ENCODE measurements at regions of chr3 and their contacts with region 1.

Region 1: GRCh38 chr3:186617038-186617946 is 4.4 kb downstream of the AHSG start:
- DNase-seq: peak; percentile 86
- ATAC-seq: peak; percentile 95
- H3K4me3 ChIP-seq: peak overlapping the region in 2 of 5 experiments; percentile 29 to 30
- H3K4me3 Mint-ChIP-seq: peak overlapping the region; percentile 74
- H3K27ac ChIP-seq: no peak overlapping the region
- H3K27ac Mint-ChIP-seq: no peak overlapping the region
- H3K4me1 ChIP-seq: peaks cover 19% of the 10 kb centered on the region in 2 donors
- H3K4me1 Mint-ChIP-seq: peaks cover 13% of the 10 kb centered on the region
- H3K27me3 ChIP-seq: peaks cover 0 to 35% (median 9%) of the 10 kb centered on the region in 4 experiments
- H3K27me3 Mint-ChIP-seq: peaks cover 58% of the 10 kb centered on the region
- CTCF ChIP-seq: peak; percentile 95

Region 2: DNA sequence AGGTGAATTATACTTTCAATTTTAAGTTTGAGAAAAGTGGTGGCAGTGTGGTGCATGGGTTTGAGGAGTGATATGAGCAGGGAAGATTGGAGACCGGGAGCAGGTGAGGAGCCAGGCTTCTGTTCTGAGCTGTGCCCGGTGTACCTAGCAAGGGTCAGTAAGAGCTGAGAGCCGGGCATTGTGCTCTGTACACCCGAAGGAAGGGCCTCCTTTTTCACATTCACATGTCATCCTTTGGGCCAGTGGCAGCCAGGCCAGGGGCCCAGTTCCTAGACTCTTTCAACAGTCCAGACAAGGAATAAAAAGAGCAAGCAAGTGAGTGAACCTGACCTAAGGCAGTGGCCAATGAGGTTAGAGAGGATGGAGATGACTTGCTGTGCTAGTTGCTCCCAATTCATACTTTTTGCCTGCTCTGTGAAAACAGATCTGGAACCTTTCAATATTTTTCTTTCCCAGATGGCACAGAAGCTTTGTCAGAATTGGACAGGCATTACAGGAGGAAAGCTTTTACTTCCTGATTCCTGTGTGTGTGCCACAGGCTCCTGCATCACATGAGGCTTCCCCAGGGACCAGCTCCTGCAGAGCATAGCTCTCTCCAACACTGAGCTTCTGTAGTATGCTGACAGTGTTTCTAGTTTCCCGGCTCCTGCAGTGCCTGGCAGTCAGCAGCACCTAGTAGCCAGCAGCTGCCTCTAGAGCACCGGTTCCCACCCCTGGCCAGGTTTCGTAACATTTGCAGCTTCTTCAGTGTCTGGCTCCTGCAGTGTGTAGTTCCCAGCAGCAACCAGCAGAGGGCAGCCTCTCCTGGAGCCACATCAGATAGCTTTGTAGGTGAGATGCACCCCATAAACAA is 674.2 kb before region 1 on chr3:
- CTCF ChIA-PET with region 1: interaction called, 55 read pairs
- POLR2A ChIA-PET with region 1: no interaction called
- intact Hi-C with region 1: loop called (anchors 1 kb)
- DNase-seq: peak; percentile 90
- ATAC-seq: peak; percentile 98
- H3K4me3 ChIP-seq: peak overlapping the region in 4 of 5 experiments; percentile 13 to 35 (median 21)
- H3K4me3 Mint-ChIP-seq: peak overlapping the region; percentile 70
- H3K27ac ChIP-seq: no peak overlapping the region
- H3K27ac Mint-ChIP-seq: peak overlapping the region; percentile 70
- H3K4me1 ChIP-seq: peaks cover 6 to 14% of the 10 kb centered on the region in 2 donors
- H3K4me1 Mint-ChIP-seq: peaks cover 14% of the 10 kb centered on the region
- H3K27me3 ChIP-seq: peaks cover 0 to 4% (median 2%) of the 10 kb centered on the region in 4 experiments
- H3K27me3 Mint-ChIP-seq: peaks cover 7% of the 10 kb centered on the region
- CTCF ChIP-seq: peak; percentile 98

Region 3: GRCh38 chr3:186259612-186260383 is 357.5 kb before region 1 on chr3:
- CTCF ChIA-PET with region 1: interaction called, 38 read pairs
- POLR2A ChIA-PET with region 1: no interaction called
- intact Hi-C with region 1: no loop called
- DNase-seq: peak; percentile 80
- ATAC-seq: peak; percentile 65
- H3K4me3 ChIP-seq: no peak overlapping the region
- H3K4me3 Mint-ChIP-seq: peak overlapping the region; percentile 10
- H3K27ac ChIP-seq: no peak overlapping the region
- H3K27ac Mint-ChIP-seq: peak overlapping the region; percentile 41
- H3K4me1 ChIP-seq: peaks cover 31 to 35% of the 10 kb centered on the region in 2 donors
- H3K4me1 Mint-ChIP-seq: peaks cover 43% of the 10 kb centered on the region
- H3K27me3 ChIP-seq: no peaks in the 10 kb centered on the region
- H3K27me3 Mint-ChIP-seq: no peaks in the 10 kb centered on the region
- CTCF ChIP-seq: peak; percentile 81

Region 4: DNA sequence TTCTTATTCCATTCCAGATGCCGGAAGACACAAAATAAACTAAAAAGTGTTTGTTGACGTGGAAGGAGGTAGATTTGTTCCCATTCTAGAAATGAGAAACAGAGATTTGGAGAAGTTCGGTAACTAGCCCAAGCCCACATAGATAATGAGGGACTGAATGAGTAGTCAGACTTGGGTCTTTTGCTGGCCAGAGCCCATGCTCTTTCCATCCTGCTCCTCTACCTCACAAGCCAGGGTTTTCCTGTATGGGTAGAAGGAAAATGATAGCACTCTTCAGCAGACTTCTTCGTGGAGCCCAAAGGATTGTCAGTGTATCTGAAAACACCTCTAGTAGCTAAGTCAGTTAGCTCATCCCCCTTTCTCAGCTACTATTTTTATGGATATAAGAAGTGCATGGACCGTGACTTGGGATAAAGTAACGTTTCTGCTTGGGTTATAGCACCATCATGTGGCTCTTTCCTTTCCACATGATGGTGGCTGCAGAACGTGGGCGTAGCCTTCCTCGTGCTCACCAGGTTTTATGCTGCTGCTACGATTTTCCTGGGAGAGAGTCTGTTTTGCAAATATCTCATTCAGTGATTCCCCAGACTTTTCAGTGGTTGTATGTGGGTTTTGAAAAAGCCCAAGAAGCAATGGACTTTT is 339.9 kb before region 1 on chr3:
- CTCF ChIA-PET with region 1: no interaction called
- POLR2A ChIA-PET with region 1: no interaction called
- intact Hi-C with region 1: no loop called
- DNase-seq: no peak
- ATAC-seq: no peak
- H3K4me3 ChIP-seq: no peak overlapping the region
- H3K4me3 Mint-ChIP-seq: no peak overlapping the region
- H3K27ac ChIP-seq: no peak overlapping the region
- H3K27ac Mint-ChIP-seq: no peak overlapping the region
- H3K4me1 ChIP-seq: peaks cover 12 to 18% of the 10 kb centered on the region in 2 donors
- H3K4me1 Mint-ChIP-seq: peaks cover 18% of the 10 kb centered on the region
- H3K27me3 ChIP-seq: no peaks in the 10 kb centered on the region
- H3K27me3 Mint-ChIP-seq: no peaks in the 10 kb centered on the region
- CTCF ChIP-seq: no peak

Region 5: GRCh38 chr3:186583831-186584230 is 33.5 kb before region 1 on chr3:
- CTCF ChIA-PET with region 1: interaction called, 10 read pairs
- POLR2A ChIA-PET with region 1: no interaction called
- intact Hi-C with region 1: no loop called
- DNase-seq: no peak
- ATAC-seq: no peak
- H3K4me3 ChIP-seq: no peak overlapping the region
- H3K4me3 Mint-ChIP-seq: no peak overlapping the region
- H3K27ac ChIP-seq: no peak overlapping the region
- H3K27ac Mint-ChIP-seq: no peak overlapping the region
- H3K4me1 ChIP-seq: no peaks in the 10 kb centered on the region
- H3K4me1 Mint-ChIP-seq: no peaks in the 10 kb centered on the region
- H3K27me3 ChIP-seq: no peaks in the 10 kb centered on the region
- H3K27me3 Mint-ChIP-seq: no peaks in the 10 kb centered on the region
- CTCF ChIP-seq: no peak

Region 6: GRCh38 chr3:186640929-186641328 is 23.6 kb after region 1 on chr3:
- CTCF ChIA-PET with region 1: interaction called, 10 read pairs
- POLR2A ChIA-PET with region 1: no interaction called
- intact Hi-C with region 1: no loop called
- DNase-seq: no peak
- ATAC-seq: no peak
- H3K4me3 ChIP-seq: no peak overlapping the region
- H3K4me3 Mint-ChIP-seq: no peak overlapping the region
- H3K27ac ChIP-seq: no peak overlapping the region
- H3K27ac Mint-ChIP-seq: no peak overlapping the region
- H3K4me1 ChIP-seq: no peaks in the 10 kb centered on the region
- H3K4me1 Mint-ChIP-seq: peaks cover 2% of the 10 kb centered on the region
- H3K27me3 ChIP-seq: peaks cover 0 to 13% (median 0%) of the 10 kb centered on the region in 4 experiments
- H3K27me3 Mint-ChIP-seq: peaks cover 17% of the 10 kb centered on the region
- CTCF ChIP-seq: no peak

Region 7: GRCh38 chr3:186772701-186773424 is 155.6 kb after region 1 on chr3:
- CTCF ChIA-PET with region 1: interaction called, 9 read pairs
- POLR2A ChIA-PET with region 1: interaction called, 6 read pairs
- intact Hi-C with region 1: loop called (anchors 1 kb)
- DNase-seq: peak; percentile 87
- ATAC-seq: peak; percentile 93
- H3K4me3 ChIP-seq: peak overlapping the region; percentile 50 to 98 (median 79)
- H3K4me3 Mint-ChIP-seq: peak overlapping the region; percentile 93
- H3K27ac ChIP-seq: peak overlapping the region; percentile 69 to 87
- H3K27ac Mint-ChIP-seq: peak overlapping the region; percentile 91
- H3K4me1 ChIP-seq: peaks cover 11 to 12% of the 10 kb centered on the region in 2 donors
- H3K4me1 Mint-ChIP-seq: peaks cover 17% of the 10 kb centered on the region
- H3K27me3 ChIP-seq: no peaks in the 10 kb centered on the region
- H3K27me3 Mint-ChIP-seq: no peaks in the 10 kb centered on the region
- CTCF ChIP-seq: no peak

Region 8: DNA sequence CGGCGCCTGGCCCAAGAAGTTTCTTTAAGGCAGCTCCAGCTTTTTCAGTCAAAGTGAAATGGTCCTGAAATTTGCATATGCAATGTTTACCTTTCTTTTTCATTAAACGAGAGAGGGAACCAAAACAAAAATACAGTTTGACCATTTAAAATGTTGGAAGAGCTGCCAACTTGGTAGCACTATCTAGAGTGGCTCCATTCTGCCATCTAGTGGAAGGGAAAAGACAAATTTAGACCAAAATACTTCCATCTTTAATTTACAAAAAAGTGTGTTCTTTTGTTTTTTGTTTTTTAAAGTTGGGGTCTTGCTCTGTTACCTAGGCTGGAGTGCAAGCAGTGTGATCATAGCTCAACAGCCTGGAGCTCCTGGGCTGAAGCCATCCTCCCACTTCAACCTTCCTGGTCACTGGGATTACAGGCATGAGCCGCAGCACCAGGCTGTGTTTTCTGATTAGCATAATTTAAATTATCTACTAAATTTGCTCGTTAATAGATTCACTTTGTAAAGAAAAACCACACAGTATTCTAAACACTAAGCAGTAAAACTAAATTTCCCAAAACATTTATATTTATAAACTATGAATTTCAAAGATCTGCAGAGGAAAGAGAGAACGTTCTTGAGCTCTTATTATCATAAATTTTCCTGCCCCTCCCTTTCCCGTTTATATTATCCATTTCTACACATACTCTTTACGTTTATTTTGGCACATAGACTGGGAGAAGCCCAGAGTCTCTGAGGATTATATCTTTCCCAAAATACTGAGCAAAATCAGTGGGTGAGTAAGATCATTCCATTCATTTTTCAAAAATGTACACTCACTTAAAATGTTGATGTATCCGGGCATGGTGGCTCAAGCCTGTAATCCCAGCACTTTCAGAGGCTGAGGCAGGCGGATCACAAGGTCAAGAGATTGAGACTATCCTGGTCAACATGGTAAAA is 204.4 kb after region 1 on chr3:
- CTCF ChIA-PET with region 1: interaction called, 237 read pairs
- POLR2A ChIA-PET with region 1: no interaction called
- intact Hi-C with region 1: loop called (anchors 1 kb)
- DNase-seq: peak; percentile 66
- ATAC-seq: no peak
- H3K4me3 ChIP-seq: no peak overlapping the region
- H3K4me3 Mint-ChIP-seq: no peak overlapping the region
- H3K27ac ChIP-seq: no peak overlapping the region
- H3K27ac Mint-ChIP-seq: no peak overlapping the region
- H3K4me1 ChIP-seq: peaks cover 19 to 21% of the 10 kb centered on the region in 2 donors
- H3K4me1 Mint-ChIP-seq: peaks cover 19% of the 10 kb centered on the region
- H3K27me3 ChIP-seq: peaks cover 0 to 27% (median 15%) of the 10 kb centered on the region in 4 experiments
- H3K27me3 Mint-ChIP-seq: peaks cover 19% of the 10 kb centered on the region
- CTCF ChIP-seq: peak; percentile 80

Region 9: DNA sequence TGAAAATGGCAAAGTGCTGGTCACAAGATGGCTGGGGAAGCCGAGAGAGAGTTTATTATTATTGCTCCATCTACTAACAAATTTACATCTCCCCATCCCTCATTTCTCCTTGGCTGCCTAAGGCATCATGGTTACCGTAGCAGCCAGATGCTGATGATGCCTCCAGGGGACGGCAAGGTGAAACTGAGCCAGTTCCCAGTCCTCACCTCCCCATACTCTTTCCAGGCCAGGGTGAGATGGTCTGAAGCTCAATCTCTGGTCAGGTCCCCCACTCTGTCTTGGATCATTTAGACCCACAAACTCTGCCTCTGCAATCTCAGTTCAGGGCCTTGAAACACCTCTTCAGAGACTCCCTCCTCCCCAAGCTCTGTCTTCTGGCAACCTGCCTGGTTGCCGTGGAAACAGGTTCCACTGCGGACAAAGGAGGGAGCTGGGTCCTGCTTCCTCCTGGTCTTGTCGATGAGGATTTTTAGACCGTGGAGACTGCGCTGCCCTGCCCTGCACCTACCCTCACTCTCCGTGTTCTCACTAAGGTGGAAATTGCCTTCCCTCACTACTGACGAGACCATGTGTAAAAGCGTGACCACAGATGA is 579.9 kb after region 1 on chr3 and contains the start of gene RTP1:
- CTCF ChIA-PET with region 1: no interaction called
- POLR2A ChIA-PET with region 1: no interaction called
- intact Hi-C with region 1: no loop called
- DNase-seq: no peak
- ATAC-seq: no peak
- H3K4me3 ChIP-seq: no peak within 1 kb of the TSS
- H3K4me3 Mint-ChIP-seq: no peak within 1 kb of the TSS
- H3K27ac ChIP-seq: no peak within 1 kb of the TSS
- H3K27ac Mint-ChIP-seq: no peak within 1 kb of the TSS
- H3K4me1 ChIP-seq: no peaks in the 10 kb centered on the region
- H3K4me1 Mint-ChIP-seq: no peaks in the 10 kb centered on the region
- H3K27me3 ChIP-seq: peaks cover 0 to 52% (median 6%) of the 10 kb centered on the region in 4 experiments
- H3K27me3 Mint-ChIP-seq: peaks cover 47% of the 10 kb centered on the region
- CTCF ChIP-seq: no peak
- total RNA-seq, gene RTP1: not detected in 2 replicates